A673 (cell line): ENCODE measurements at regions of chr15 and their contacts with region 1.

Region 1: DNA sequence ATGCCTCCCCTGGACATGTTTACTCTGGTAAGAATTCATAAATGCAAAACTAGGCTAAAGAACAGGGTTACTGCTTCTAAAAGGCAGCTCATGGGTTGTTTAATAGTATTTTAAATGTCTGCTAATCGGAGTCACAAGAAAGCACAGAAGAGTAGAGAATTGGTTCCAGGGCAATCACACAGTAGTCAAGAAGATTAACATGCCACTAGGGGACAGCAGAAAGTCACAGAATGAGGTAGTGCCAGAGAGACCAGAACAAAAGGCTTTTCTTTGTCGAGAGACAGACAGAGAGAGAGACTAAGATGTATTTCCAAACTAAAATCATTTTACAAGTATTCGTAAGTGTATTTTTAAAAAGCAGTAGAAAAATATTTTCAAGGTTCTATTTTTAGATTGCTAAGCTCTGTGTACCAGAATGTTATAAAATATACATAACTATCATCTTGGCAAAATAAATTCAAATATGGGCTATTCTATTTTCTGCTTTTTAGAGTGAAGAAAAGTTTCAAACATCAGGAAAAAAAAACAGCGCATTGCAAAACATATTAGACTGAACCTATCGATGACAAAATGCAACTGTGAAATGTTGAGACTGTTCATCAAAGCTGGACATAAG is 78.3 kb upstream of the CDIN1 start:
- DNase-seq: peak; percentile 78
- H3K4me3 ChIP-seq: no peak overlapping the region
- H3K27ac ChIP-seq: no peak overlapping the region
- H3K4me1 ChIP-seq: peaks cover 4% of the 10 kb centered on the region
- H3K27me3 ChIP-seq: no peaks in the 10 kb centered on the region
- CTCF ChIP-seq: peak; percentile 75

Region 2: DNA sequence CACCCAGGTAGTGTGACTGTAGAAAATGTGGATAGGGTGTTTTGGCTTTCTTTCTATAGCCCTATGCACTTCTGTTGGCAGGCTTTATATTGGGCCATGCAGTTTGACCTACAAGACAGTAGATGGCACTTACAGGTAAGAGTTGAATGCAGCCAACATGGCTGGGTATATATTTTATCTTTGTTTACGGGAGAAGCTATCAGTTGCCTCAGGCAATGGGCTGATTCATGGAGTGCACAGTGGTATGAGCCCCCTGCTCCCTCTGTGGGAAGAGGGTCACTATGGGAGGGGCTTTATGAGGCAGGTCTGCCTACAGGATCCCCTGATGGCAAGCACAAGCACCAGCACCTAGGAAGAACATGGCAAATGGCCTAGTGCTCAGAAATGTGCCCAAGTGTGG is 223.0 kb before region 1 on chr15:
- CTCF ChIA-PET with region 1: no interaction called
- POLR2A ChIA-PET with region 1: no interaction called
- intact Hi-C with region 1: loop called (anchors 10 kb)
- DNase-seq: peak; percentile 23
- H3K4me3 ChIP-seq: no peak overlapping the region
- H3K27ac ChIP-seq: no peak overlapping the region
- H3K4me1 ChIP-seq: no peaks in the 10 kb centered on the region
- H3K27me3 ChIP-seq: peaks cover 11% of the 10 kb centered on the region
- CTCF ChIP-seq: peak; percentile 43; the same call in 1 of the 2 replicates

Region 3: DNA sequence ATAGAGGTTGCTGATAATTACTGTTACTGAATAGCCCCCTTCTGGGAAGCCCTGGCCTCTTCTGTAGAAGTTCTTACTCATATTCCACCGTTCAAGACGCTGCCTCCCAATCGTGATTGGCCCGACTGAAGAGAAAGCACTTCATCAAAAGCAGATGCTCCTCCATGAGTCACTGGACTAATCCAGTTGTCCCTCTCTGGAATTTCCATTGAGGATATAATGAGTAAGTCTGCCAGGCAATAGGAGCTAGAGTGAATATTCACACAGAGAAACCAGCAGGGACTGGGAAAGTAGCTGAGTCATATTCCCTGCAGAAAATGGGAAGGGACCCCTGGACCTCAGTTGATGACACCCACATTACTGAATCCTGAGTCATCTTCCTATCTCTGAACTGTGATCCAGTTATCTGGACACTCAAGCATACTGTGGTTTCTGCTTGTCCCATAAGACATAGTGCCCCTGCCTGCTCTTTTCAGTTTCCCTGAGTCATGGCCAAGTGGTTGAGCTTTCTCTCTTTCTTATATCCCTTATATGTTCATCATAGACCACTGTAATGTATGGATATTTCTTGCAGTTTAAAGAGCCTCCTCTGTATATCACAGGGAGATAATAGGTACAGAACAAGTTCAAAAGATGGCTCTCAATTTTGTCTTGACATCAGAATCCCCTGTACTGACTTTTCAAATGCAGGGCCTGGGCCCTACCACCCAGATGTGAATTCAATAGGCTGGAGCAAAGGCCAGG is 72.9 kb before region 1 on chr15:
- CTCF ChIA-PET with region 1: no interaction called
- POLR2A ChIA-PET with region 1: no interaction called
- intact Hi-C with region 1: no loop called
- DNase-seq: peak; percentile 92
- H3K4me3 ChIP-seq: no peak overlapping the region
- H3K27ac ChIP-seq: no peak overlapping the region
- H3K4me1 ChIP-seq: peaks cover 8% of the 10 kb centered on the region
- H3K27me3 ChIP-seq: no peaks in the 10 kb centered on the region
- CTCF ChIP-seq: no peak

Region 4: DNA sequence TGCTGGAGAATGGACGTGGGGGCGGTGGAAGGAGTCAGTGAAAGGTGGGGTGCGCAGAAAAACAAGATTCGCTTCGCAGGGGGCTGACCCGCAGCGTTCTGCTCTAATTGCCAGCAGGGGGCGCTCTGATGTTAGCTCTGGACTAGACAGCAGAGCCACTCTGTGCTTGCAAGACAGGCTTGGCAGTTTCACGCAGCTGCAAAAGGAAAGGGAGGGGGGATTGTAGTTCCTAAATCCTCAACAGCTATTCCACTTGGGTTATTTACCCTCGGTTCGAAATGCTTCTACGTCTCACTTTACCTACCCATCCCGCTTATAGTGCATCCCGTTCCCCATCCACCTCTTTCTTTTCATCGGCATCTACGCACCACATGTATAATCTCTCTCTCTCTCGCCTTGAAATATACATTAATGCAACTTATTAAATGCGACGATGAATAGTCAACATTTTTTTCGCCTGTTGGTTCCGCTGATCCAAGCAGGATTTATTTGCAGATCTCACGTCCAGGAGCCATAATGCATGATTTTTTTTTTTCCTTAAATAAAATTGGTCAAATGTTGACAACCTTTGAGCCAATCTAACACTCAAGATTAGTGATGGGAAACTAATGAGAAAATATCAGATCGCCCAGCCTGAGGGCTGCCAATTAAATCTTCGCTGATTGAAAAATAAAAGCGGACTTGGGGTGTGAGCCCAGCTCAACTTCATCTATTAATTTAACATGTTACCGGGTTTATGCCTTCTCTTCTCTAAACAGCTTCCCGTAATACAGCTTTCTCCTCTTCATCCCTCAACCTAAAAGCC is 382.7 kb after region 1 on chr15:
- CTCF ChIA-PET with region 1: no interaction called
- POLR2A ChIA-PET with region 1: no interaction called
- intact Hi-C with region 1: loop called (anchors 2 kb)
- DNase-seq: peak; percentile 90
- H3K4me3 ChIP-seq: no peak overlapping the region
- H3K27ac ChIP-seq: no peak overlapping the region
- H3K4me1 ChIP-seq: peaks cover 13% of the 10 kb centered on the region
- H3K27me3 ChIP-seq: peaks cover 57% of the 10 kb centered on the region
- CTCF ChIP-seq: peak; percentile 93

Region 5: DNA sequence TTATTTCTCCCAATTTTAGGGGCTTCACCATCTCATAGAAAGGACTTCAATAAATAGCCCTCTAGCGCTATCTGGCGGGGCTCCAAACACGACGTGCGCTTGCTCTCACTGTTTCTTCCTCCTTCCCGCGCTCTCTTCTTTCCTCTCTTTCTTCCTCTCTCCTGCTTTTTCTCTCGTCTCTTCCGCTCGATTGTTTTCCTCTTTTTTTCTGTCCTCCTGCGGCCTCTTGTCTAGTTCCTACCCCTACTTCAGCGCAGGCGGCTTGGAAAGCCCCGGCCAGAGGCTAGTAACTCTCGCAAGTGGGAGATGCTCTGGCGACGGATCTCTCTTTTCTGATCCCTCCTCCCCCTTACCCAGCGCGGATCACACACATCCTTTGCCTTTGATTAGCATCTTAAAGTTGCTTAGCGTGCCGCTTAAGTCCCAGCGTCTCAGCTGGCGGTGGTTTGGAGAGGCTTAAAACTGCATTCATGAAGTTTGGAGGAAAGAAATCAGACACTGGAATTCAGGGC is 605.4 kb after region 1 on chr15:
- CTCF ChIA-PET with region 1: no interaction called
- POLR2A ChIA-PET with region 1: interaction called, 10 read pairs
- intact Hi-C with region 1: loop called (anchors 1 kb)
- DNase-seq: peak; percentile 58
- H3K4me3 ChIP-seq: peak overlapping the region; percentile 23
- H3K27ac ChIP-seq: no peak overlapping the region
- H3K4me1 ChIP-seq: peaks cover 8% of the 10 kb centered on the region
- H3K27me3 ChIP-seq: peaks cover 87% of the 10 kb centered on the region
- CTCF ChIP-seq: peak; percentile 62